PC-9 (cell line): ENCODE measurements at regions of chr5 and their contacts with region 1.

Region 1: DNA sequence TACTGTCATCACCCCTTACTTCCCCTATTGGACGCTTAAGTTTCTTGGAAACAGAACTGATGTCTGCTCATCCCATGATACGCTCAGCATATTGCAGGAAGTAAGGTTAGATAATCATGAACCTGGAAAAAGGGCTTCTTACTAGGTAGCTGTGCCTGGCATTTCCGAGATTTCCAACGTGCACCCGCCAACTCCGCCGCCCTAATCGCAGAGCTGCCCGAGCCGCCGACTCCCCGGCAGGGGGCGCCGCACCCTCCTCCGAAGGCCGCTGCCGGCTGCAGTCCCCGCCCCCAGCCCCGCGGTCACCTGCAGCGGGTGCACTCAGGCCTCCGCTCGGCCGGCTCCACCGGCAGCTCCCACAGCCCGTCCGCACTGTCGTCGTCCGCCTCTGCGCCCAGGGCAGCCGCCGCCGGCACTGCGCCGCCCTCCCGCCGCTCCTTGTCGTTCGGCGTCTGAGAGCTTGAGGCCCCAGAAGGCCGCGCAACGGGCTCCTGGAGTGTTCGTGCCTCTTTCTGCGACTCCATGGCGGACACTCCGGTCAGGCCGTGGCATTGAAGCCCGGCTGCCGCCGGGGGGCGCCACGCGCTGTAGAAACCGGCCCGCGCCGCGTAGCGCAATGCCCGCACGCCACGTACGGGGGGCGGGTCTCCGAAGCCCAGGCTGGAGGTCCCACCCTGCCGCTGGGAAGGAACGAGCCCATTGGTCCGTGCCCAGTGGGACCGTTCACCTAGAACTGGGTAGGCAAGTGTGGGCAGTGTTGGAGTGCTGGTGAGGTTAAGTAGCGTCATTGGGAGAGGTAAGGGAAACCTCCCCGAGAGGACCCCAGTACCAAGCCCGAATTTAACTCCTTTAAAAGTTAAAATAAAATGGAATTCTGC is at the start of gene DTWD2:
- DNase-seq: peak; percentile 87 to 96
- H3K4me3 ChIP-seq: peak within 1 kb of the TSS; percentile 78
- H3K27ac ChIP-seq: peak within 1 kb of the TSS; percentile 68
- H3K4me1 ChIP-seq: peaks cover 27% of the 10 kb centered on the region
- H3K27me3 ChIP-seq: no peaks in the 10 kb centered on the region
- CTCF ChIP-seq: peak; percentile 90
- total RNA-seq, gene DTWD2: 3.3 and 4.9 TPM in 2 replicates

Region 2: GRCh38 chr5:118902656-118903438 is 85.4 kb before region 1 on chr5:
- CTCF ChIA-PET with region 1: no interaction called
- POLR2A ChIA-PET with region 1: no interaction called
- intact Hi-C with region 1: no loop called
- DNase-seq: no peak
- H3K4me3 ChIP-seq: no peak overlapping the region
- H3K27ac ChIP-seq: no peak overlapping the region
- H3K4me1 ChIP-seq: no peaks in the 10 kb centered on the region
- H3K27me3 ChIP-seq: no peaks in the 10 kb centered on the region
- CTCF ChIP-seq: no peak

Region 3: DNA sequence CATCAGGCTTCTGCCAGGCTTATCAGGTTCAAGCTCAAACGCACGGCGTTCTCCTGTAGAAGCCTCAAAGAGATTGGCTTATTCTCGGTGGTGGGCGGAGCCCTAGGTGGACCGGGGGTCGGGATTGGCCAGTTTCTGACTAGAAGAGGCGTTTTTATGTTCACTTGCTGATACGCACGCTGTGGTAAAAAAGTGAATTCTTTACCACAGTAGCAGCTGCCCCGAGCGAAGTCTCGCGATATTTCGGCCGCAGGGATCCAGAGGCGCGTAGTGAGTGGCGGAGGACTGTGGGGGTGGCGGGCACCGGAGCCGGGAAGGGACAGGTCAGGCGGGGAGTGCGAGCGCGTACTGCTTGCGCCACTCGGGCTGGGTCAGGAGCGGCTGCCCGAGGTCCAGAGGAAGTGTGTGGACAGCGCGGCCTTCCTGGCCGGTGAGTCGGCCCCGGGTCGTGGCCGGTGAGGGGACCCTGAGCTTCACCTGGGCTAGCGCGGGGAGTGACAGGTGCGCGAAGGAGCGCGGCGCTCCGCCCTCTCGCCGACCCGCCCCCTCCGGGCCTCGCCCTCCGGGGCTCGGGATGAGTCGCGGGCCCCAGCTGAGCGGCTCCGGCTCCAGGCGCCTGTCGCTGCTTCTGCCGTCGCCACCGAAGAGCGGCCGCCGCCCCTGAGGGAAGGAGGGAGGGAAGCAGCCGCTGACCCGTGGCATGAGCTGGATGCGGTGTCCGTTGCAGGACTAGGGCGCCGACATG is 82.8 kb after region 1 on chr5 and contains the start of gene DMXL1:
- CTCF ChIA-PET with region 1: interaction called, 3 read pairs
- POLR2A ChIA-PET with region 1: no interaction called
- intact Hi-C with region 1: loop called (anchors 2 kb)
- DNase-seq: peak; percentile 97 to 98
- H3K4me3 ChIP-seq: peak within 1 kb of the TSS; percentile 95
- H3K27ac ChIP-seq: peak within 1 kb of the TSS; percentile 80
- H3K4me1 ChIP-seq: peaks cover 16% of the 10 kb centered on the region
- H3K27me3 ChIP-seq: no peaks in the 10 kb centered on the region
- CTCF ChIP-seq: no peak
- total RNA-seq, gene DMXL1: 19.7 and 27.3 TPM in 2 replicates

Region 4: GRCh38 chr5:119267958-119268386 is 279.7 kb after region 1 on chr5:
- CTCF ChIA-PET with region 1: no interaction called
- POLR2A ChIA-PET with region 1: no interaction called
- intact Hi-C with region 1: loop called (anchors 1 kb)
- DNase-seq: peak; percentile 76 to 79
- H3K4me3 ChIP-seq: peak overlapping the region; percentile 95
- H3K27ac ChIP-seq: no peak overlapping the region
- H3K4me1 ChIP-seq: peaks cover 18% of the 10 kb centered on the region
- H3K27me3 ChIP-seq: no peaks in the 10 kb centered on the region
- CTCF ChIP-seq: no peak; the same call in 1 of the 2 replicates

Region 5: DNA sequence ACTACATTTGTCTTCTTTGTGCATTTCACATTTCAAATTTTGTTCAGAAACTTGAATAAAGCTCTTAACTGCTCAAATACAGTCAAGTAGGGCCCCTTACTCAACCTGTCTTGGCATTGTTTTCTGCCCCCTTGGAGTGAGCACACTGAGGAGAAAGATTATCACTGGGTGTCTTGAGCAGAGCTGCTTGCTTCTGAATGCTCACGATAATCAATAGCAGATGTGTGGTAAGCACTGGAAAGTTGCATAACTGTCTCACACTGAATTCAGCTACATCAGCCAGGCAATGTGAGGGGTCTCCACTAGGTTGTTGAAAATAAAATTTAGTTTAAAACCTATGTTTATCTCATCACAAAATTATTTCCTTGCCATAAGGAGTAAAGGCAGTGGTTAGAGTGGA is 359.8 kb after region 1 on chr5:
- CTCF ChIA-PET with region 1: no interaction called
- POLR2A ChIA-PET with region 1: no interaction called
- intact Hi-C with region 1: no loop called
- DNase-seq: no peak
- H3K4me3 ChIP-seq: no peak overlapping the region
- H3K27ac ChIP-seq: no peak overlapping the region
- H3K4me1 ChIP-seq: peaks cover 19% of the 10 kb centered on the region
- H3K27me3 ChIP-seq: no peaks in the 10 kb centered on the region
- CTCF ChIP-seq: no peak

Region 6: DNA sequence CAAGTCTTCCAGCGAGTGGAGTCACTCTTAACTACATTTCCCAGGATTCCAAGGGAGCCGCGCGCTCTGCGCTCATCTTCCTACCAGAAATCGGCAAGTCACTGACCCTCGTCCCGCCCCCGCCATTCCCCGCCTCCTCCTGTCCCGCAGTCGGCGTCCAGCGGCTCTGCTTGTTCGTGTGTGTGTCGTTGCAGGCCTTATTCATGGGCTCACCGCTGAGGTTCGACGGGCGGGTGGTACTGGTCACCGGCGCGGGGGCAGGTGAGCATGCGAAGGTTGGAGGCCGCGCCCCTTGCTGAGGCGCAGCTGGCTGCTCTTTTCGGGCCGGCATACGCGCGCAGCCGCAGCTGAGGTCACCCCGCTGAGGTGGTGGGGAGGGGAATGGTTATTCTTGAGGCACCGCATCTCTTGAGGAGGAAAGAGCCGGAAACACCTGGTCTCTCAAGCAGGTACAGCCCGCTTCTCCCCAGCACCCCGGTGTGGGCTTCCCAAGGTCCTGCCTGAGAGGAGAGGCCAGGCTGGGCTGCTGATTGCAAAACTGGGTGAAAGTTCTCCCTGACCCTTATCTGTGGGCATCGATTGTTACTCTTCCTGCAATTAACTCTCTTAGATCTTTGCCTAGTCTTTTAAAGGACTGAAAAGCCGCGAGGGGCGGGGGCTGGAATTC is 464.3 kb after region 1 on chr5 and contains the start of gene HSD17B4:
- CTCF ChIA-PET with region 1: no interaction called
- POLR2A ChIA-PET with region 1: no interaction called
- intact Hi-C with region 1: loop called (anchors 5 kb)
- DNase-seq: peak; percentile 76 to 82
- H3K4me3 ChIP-seq: peak within 1 kb of the TSS; percentile 79
- H3K27ac ChIP-seq: peak within 1 kb of the TSS; percentile 78
- H3K4me1 ChIP-seq: peaks cover 9% of the 10 kb centered on the region
- H3K27me3 ChIP-seq: no peaks in the 10 kb centered on the region
- CTCF ChIP-seq: no peak
- total RNA-seq, gene HSD17B4: 148 and 226 TPM in 2 replicates

Region 7: GRCh38 chr5:119470851-119471451 is 482.7 kb after region 1 on chr5:
- CTCF ChIA-PET with region 1: no interaction called
- POLR2A ChIA-PET with region 1: no interaction called
- intact Hi-C with region 1: loop called (anchors 5 kb)
- DNase-seq: no peak
- H3K4me3 ChIP-seq: no peak overlapping the region
- H3K27ac ChIP-seq: no peak overlapping the region
- H3K4me1 ChIP-seq: no peaks in the 10 kb centered on the region
- H3K27me3 ChIP-seq: no peaks in the 10 kb centered on the region
- CTCF ChIP-seq: peak; percentile 50

Region 8: DNA sequence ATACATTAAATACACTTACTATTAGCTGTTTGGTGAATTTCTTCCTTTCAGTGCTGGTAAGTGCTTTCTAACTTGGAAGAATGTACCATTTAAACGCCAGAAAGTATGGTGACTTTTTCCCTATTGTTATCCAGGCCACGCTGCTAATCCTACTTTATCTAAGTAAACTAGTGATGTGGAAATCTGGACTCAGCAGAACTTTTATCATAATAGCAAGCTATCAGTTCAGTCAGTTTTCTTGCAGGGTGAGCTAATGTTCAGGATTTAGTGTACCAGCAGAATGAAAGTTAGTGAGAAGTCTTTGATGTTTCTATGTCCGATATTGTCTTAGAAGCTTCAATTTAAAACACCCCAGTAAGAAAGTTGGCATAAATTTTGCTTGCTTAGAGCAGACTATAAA is 536.3 kb after region 1 on chr5:
- CTCF ChIA-PET with region 1: no interaction called
- POLR2A ChIA-PET with region 1: no interaction called
- intact Hi-C with region 1: loop called (anchors 5 kb)
- DNase-seq: no peak
- H3K4me3 ChIP-seq: no peak overlapping the region
- H3K27ac ChIP-seq: no peak overlapping the region
- H3K4me1 ChIP-seq: no peaks in the 10 kb centered on the region
- H3K27me3 ChIP-seq: no peaks in the 10 kb centered on the region
- CTCF ChIP-seq: no peak

Region 9: GRCh38 chr5:119743927-119744326 is 755.7 kb after region 1 on chr5:
- CTCF ChIA-PET with region 1: no interaction called
- POLR2A ChIA-PET with region 1: no interaction called
- intact Hi-C with region 1: loop called (anchors 5 kb)
- DNase-seq: peak; percentile 10 to 37
- H3K4me3 ChIP-seq: no peak overlapping the region
- H3K27ac ChIP-seq: no peak overlapping the region
- H3K4me1 ChIP-seq: no peaks in the 10 kb centered on the region
- H3K27me3 ChIP-seq: no peaks in the 10 kb centered on the region
- CTCF ChIP-seq: peak; percentile 75